ENCODE measurements at regions of chr6 and their contacts with region 1.

Region 1: GRCh38 chr6:150891888-150892485 is 26.5 kb downstream of the MTHFD1L start:
- DNase-seq: peak; percentile 74
- ATAC-seq: peak; percentile 85
- H3K4me3 ChIP-seq: no peak overlapping the region
- H3K27ac ChIP-seq: no peak overlapping the region
- H3K4me1 ChIP-seq: no peaks in the 10 kb centered on the region; the same call in 1 of the 2 replicates
- H3K27me3 ChIP-seq: no peaks in the 10 kb centered on the region
- CTCF ChIP-seq: peak; percentile 89

Region 2: GRCh38 chr6:150905769-150906506 is 14.0 kb after region 1 on chr6:
- CTCF ChIA-PET with region 1: interaction called, 4 read pairs
- POLR2A ChIA-PET with region 1: interaction called, 10 read pairs
- in situ Hi-C with region 1: no loop called
- intact Hi-C with region 1: no loop called
- DNase-seq: no peak
- ATAC-seq: no peak
- H3K4me3 ChIP-seq: no peak overlapping the region
- H3K27ac ChIP-seq: no peak overlapping the region
- H3K4me1 ChIP-seq: no peaks in the 10 kb centered on the region
- H3K27me3 ChIP-seq: no peaks in the 10 kb centered on the region
- CTCF ChIP-seq: peak; percentile 71

Region 3: GRCh38 chr6:151330134-151330696 is 438.2 kb after region 1 on chr6:
- CTCF ChIA-PET with region 1: interaction called, 15 read pairs
- POLR2A ChIA-PET with region 1: no interaction called
- in situ Hi-C with region 1: no loop called
- intact Hi-C with region 1: loop called (anchors 2 kb)
- DNase-seq: no peak
- ATAC-seq: no peak
- H3K4me3 ChIP-seq: peak overlapping the region in 1 of 2 experiments; percentile 85; a peak in 2 of 4 replicates
- H3K27ac ChIP-seq: peak overlapping the region; percentile 57; the same call in 1 of the 2 replicates
- H3K4me1 ChIP-seq: peaks cover 8% of the 10 kb centered on the region
- H3K27me3 ChIP-seq: no peaks in the 10 kb centered on the region
- CTCF ChIP-seq: no peak

Region 4: GRCh38 chr6:151335930-151336329 is 443.9 kb after region 1 on chr6:
- CTCF ChIA-PET with region 1: interaction called, 15 read pairs
- POLR2A ChIA-PET with region 1: no interaction called
- in situ Hi-C with region 1: no loop called
- intact Hi-C with region 1: loop called (anchors 2 kb)
- DNase-seq: no peak
- ATAC-seq: no peak
- H3K4me3 ChIP-seq: no peak overlapping the region
- H3K27ac ChIP-seq: no peak overlapping the region
- H3K4me1 ChIP-seq: no peaks in the 10 kb centered on the region; the same call in 1 of the 2 replicates
- H3K27me3 ChIP-seq: no peaks in the 10 kb centered on the region
- CTCF ChIP-seq: no peak